ENCODE measurements at regions of chr15 and their contacts with region 1.

Region 1: DNA sequence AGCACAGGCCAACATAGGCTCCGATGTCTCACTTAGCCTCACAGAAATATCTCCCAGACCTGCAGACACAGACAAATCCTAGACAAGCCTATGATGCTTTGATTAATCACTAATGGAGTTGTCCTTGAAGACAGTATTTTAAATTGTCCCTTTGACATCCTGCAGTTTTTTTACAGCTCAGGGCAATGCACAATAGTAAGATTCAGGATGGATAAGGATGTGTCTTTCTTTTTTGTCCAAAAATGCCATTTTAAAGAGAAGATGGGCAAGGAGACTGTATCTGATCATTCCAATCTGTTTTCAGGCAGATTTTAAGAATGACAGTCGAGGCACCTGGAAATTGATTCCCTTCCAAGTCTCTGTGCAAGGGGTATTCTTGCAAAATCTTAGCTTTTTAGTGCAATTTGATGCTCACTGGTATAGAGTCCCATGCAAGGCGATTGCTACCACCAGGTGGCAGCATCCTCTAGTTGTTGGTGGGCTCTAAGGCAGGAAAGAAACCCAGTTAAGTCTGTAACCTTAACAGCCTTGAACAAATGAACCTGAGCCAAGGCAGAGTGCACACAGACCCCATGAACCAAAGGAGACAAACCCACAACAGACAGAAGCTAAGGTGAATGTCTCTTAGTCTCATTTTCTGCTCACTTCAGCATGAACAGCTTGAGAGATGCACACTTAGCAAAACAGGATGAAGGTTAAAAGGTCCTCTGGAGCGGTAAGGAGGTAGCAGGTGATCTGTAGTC is 51.2 kb upstream of the MINAR1 start:
- DNase-seq: peak; percentile 11 to 55
- ATAC-seq: peak; percentile 76 to 89
- H3K4me3 ChIP-seq: no peak overlapping the region
- H3K27ac ChIP-seq: no peak overlapping the region
- H3K4me1 ChIP-seq: no peaks in the 10 kb centered on the region
- H3K27me3 ChIP-seq: no peaks in the 10 kb centered on the region
- CTCF ChIP-seq: peak; percentile 66 to 87 (median 76)
- POLR2A ChIP-seq: no peak

Region 2: GRCh38 chr15:79230766-79231165 is 150.2 kb before region 1 on chr15:
- in situ Hi-C with region 1: no loop called
- intact Hi-C with region 1: no loop called
- DNase-seq: no peak
- ATAC-seq: no peak
- H3K4me3 ChIP-seq: no peak overlapping the region
- H3K27ac ChIP-seq: no peak overlapping the region
- H3K4me1 ChIP-seq: no peaks in the 10 kb centered on the region
- H3K27me3 ChIP-seq: no peaks in the 10 kb centered on the region
- CTCF ChIP-seq: no peak
- POLR2A ChIP-seq: no peak

Region 3: GRCh38 chr15:79431636-79432344 is 50.9 kb after region 1 on chr15 and contains the start of gene MINAR1:
- in situ Hi-C with region 1: no loop called
- intact Hi-C with region 1: loop called (anchors 2 kb)
- DNase-seq: no peak
- ATAC-seq: peak; percentile 30 to 36
- H3K4me3 ChIP-seq: peak within 1 kb of the TSS; percentile 50 to 55 (median 54)
- H3K27ac ChIP-seq: peak within 1 kb of the TSS in 1 of 4 donors; percentile 41
- H3K4me1 ChIP-seq: peaks cover 0 to 6% of the 10 kb centered on the region in 2 donors
- H3K27me3 ChIP-seq: peaks cover 22 to 60% (median 39%) of the 10 kb centered on the region in 3 donors
- CTCF ChIP-seq: peak in 1 of 5 experiments; percentile 13
- POLR2A ChIP-seq: no peak
- total RNA-seq, gene MINAR1: 0.05 to 1.1 (median 0.30) TPM

Region 4: GRCh38 chr15:79596051-79596507 is 215.2 kb after region 1 on chr15:
- in situ Hi-C with region 1: loop called in 2 of 4 experiments (anchors 5 to 10 kb)
- intact Hi-C with region 1: no loop called
- DNase-seq: peak; percentile 10 to 27
- ATAC-seq: peak in 1 of 2 donors; percentile 76
- H3K4me3 ChIP-seq: no peak overlapping the region
- H3K27ac ChIP-seq: no peak overlapping the region
- H3K4me1 ChIP-seq: no peaks in the 10 kb centered on the region
- H3K27me3 ChIP-seq: no peaks in the 10 kb centered on the region
- CTCF ChIP-seq: peak in 4 of 5 experiments; percentile 29 to 66 (median 57)
- POLR2A ChIP-seq: no peak

Region 5: DNA sequence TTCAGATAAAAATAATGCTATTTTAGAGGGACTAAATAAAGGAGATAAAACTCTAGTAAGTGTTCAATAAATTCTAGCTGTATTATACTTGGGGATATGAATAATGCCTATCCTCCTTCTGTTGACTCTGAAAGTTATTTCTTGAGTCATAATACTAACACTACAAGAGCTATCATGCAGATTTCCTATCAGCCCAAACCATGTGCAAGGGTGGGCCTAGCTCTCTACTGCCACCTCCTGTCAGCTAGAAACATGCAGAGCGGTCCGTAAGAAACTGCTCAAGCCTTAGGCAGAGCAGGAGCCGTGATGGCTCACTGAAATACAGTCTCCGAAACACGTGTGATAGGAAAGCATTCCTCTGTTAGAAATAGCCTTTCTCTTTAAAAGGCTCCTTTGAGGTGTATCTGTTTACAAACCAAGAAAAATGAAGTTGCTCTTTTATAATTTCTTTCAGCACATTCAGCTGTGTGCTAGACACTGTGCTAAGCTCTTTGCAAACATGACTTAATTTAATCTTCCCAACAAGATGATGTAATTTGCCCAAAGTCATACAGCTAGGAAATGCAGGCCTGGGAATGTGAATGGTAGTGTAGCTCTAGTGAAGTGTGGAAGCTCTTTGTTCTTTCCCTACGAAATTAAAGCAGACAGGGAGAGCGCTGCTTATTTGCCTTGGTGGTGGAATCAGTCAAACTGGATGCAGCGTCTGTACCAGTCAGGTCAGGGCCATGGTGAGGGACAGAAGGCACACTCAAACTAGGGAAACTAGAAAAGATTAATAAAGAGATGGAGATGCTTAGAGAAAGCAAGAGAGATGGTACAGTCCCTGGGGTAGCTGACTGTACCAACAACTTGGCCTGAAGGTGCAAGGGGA is 472.8 kb after region 1 on chr15:
- in situ Hi-C with region 1: loop called in 3 of 4 experiments (anchors 5 kb)
- intact Hi-C with region 1: loop called (anchors 1 kb)
- DNase-seq: peak; percentile 21 to 23
- ATAC-seq: peak; percentile 66 to 87
- H3K4me3 ChIP-seq: no peak overlapping the region
- H3K27ac ChIP-seq: no peak overlapping the region
- H3K4me1 ChIP-seq: no peaks in the 10 kb centered on the region
- H3K27me3 ChIP-seq: no peaks in the 10 kb centered on the region
- CTCF ChIP-seq: peak; percentile 66 to 94 (median 80)
- POLR2A ChIP-seq: no peak

Region 6: DNA sequence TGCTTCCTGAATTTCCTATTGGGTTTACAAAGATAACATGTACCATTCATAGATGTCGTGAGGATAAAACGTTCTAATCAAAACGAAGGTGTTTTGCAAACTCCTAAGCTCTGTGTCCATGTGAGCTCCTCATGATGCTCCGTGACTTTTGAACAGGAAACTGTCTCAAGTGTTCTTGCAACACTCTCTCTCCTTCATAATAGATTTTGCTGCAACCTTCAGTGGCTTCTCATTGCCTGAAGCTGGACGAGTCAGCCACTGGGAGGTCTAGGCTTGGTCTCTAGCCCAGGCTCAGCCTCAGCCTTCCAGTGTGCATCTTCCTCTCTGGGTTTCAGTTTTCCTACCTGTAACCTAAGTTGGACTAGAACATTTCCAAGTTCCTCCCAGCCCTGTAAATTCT is 608.8 kb after region 1 on chr15:
- in situ Hi-C with region 1: loop called in 2 of 4 experiments (anchors 10 kb)
- intact Hi-C with region 1: no loop called
- DNase-seq: no peak
- ATAC-seq: no peak
- H3K4me3 ChIP-seq: no peak overlapping the region
- H3K27ac ChIP-seq: no peak overlapping the region
- H3K4me1 ChIP-seq: peaks cover 0 to 2% of the 10 kb centered on the region in 2 donors
- H3K27me3 ChIP-seq: no peaks in the 10 kb centered on the region
- CTCF ChIP-seq: no peak
- POLR2A ChIP-seq: no peak